Esophagus squamous epithelium (tissue), 5 donors: ENCODE measurements at regions of chr3 and their contacts with region 1.

Region 1: DNA sequence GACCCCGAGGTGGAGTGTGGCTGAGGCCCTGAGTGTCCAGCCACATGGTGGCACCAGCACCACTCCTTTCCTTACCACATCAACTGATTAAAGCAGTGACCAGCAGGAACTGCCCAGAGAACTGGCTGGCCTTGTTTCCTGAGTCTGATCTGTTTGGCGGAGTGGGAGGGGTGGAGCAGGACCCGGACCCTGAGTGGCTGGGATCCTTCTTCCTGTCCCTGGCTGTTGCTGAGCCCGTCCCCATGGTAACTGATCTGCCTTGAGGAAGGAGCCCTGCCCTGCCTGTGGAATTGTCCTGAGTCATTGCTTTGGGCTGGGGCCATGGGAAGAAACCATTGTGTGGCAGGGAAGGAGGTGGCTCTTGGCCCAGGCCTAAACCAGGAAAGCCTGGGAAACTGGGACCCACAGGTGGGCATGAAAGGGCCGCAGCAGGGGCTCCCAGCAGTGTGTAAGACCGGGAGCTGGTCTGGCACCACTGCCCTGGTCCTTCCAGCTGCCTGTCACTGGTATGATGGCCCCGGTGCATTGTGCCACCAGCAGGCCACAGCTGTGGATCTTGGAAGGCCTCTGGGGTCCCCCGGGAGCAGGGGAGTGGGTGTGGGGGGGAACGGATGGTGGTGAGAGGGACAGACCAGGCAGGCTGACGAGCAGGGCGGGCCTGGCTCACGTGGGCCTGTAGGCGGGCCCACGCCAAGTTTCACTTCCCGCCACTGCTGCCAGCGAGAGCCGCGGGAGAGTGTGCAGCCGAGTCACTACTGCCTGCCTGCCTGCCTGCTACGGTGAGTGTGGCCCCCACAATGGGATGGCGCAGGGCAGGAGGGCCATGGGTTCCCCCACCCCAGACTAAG is 19.2 kb downstream of the ATRIP start:
- DNase-seq: peak; percentile 85
- H3K4me3 ChIP-seq: peak overlapping the region; percentile 37 to 75 (median 52)
- H3K27ac ChIP-seq: peak overlapping the region; percentile 91 to 100 (median 99)
- H3K4me1 ChIP-seq: peaks cover 55 to 65% (median 56%) of the 10 kb centered on the region in 3 donors
- H3K27me3 ChIP-seq: no peaks in the 10 kb centered on the region
- CTCF ChIP-seq: peak; percentile 49 to 87 (median 58)
- POLR2A ChIP-seq: peak in 3 of 4 donors; percentile 42 to 94 (median 84)

Region 2: GRCh38 chr3:48504051-48504946 is 38.5 kb after region 1 on chr3 and contains the start of gene SHISA5:
- intact Hi-C with region 1: loop called (anchors 5 kb)
- DNase-seq: no peak
- H3K4me3 ChIP-seq: peak within 1 kb of the TSS; percentile 69 to 89 (median 73)
- H3K27ac ChIP-seq: peak within 1 kb of the TSS; percentile 95 to 99 (median 96)
- H3K4me1 ChIP-seq: peaks cover 35 to 86% (median 59%) of the 10 kb centered on the region in 3 donors
- H3K27me3 ChIP-seq: no peaks in the 10 kb centered on the region
- CTCF ChIP-seq: no peak
- POLR2A ChIP-seq: peak in 2 of 4 donors; percentile 18 to 56
- total RNA-seq, gene SHISA5: 71.8 to 138 (median 115) TPM

Region 3: GRCh38 chr3:48552111-48552951 is 86.6 kb after region 1 on chr3:
- intact Hi-C with region 1: loop called (anchors 5 kb)
- DNase-seq: no peak
- H3K4me3 ChIP-seq: no peak overlapping the region
- H3K27ac ChIP-seq: no peak overlapping the region
- H3K4me1 ChIP-seq: peaks cover 17 to 45% (median 17%) of the 10 kb centered on the region in 3 donors
- H3K27me3 ChIP-seq: no peaks in the 10 kb centered on the region
- CTCF ChIP-seq: no peak
- POLR2A ChIP-seq: no peak